Activated T-helper 1 cell treated with anti-CD3 and anti-CD28 coated beads, Interleukin-12 subunit alpha, Interleukin-12 subunit beta, Interleukin-2, Interleukin-4 antibody, amounts not matched to agents 30 ng/mL and 10 ng/mL and 1 ng/mL, durations not matched to agents 14 hours and 24 hours and 36 hours (primary cell): ENCODE measurements at regions of chr7 and their contacts with region 1.

Region 1: GRCh38 chr7:12524794-12525386 is 45.6 kb upstream of the SCIN start:
- DNase-seq: no peak
- H3K4me3 Mint-ChIP-seq: no peak overlapping the region
- H3K27ac Mint-ChIP-seq: no peak overlapping the region
- H3K4me1 Mint-ChIP-seq: no peaks in the 10 kb centered on the region
- H3K27me3 Mint-ChIP-seq: peaks cover 16% of the 10 kb centered on the region

Region 2: GRCh38 chr7:12623897-12624498 is 99.1 kb after region 1 on chr7:
- intact Hi-C with region 1: loop called (anchors 1 kb)
- DNase-seq: no peak
- H3K4me3 Mint-ChIP-seq: no peak overlapping the region
- H3K27ac Mint-ChIP-seq: no peak overlapping the region
- H3K4me1 Mint-ChIP-seq: no peaks in the 10 kb centered on the region
- H3K27me3 Mint-ChIP-seq: peaks cover 16% of the 10 kb centered on the region

Region 3: GRCh38 chr7:12638851-12639467 is 114.1 kb after region 1 on chr7:
- intact Hi-C with region 1: loop called (anchors 5 kb)
- DNase-seq: no peak
- H3K4me3 Mint-ChIP-seq: no peak overlapping the region
- H3K27ac Mint-ChIP-seq: no peak overlapping the region
- H3K4me1 Mint-ChIP-seq: peaks cover 16% of the 10 kb centered on the region
- H3K27me3 Mint-ChIP-seq: peaks cover 4% of the 10 kb centered on the region

Region 4: GRCh38 chr7:13262929-13263530 is 738.1 kb after region 1 on chr7:
- intact Hi-C with region 1: loop called (anchors 1 kb)
- DNase-seq: no peak
- H3K4me3 Mint-ChIP-seq: no peak overlapping the region
- H3K27ac Mint-ChIP-seq: no peak overlapping the region
- H3K4me1 Mint-ChIP-seq: no peaks in the 10 kb centered on the region
- H3K27me3 Mint-ChIP-seq: no peaks in the 10 kb centered on the region

Region 5: GRCh38 chr7:14457568-14458453 is 1932.9 kb after region 1 on chr7:
- intact Hi-C with region 1: loop called (anchors 5 kb)
- DNase-seq: peak; percentile 3
- H3K4me3 Mint-ChIP-seq: no peak overlapping the region
- H3K27ac Mint-ChIP-seq: no peak overlapping the region
- H3K4me1 Mint-ChIP-seq: no peaks in the 10 kb centered on the region
- H3K27me3 Mint-ChIP-seq: no peaks in the 10 kb centered on the region